Aorta (tissue), 5 donors: ENCODE measurements at regions of chr2 and their contacts with region 1.

Region 1: GRCh38 chr2:218275371-218276072 is 5.2 kb downstream of the PNKD start:
- DNase-seq: no peak
- ATAC-seq: no peak
- H3K4me3 ChIP-seq: no peak overlapping the region
- H3K27ac ChIP-seq: peak overlapping the region in 1 of 2 donors; percentile 13
- H3K4me1 ChIP-seq: no peaks in the 10 kb centered on the region
- H3K27me3 ChIP-seq: no peaks in the 10 kb centered on the region

Region 2: DNA sequence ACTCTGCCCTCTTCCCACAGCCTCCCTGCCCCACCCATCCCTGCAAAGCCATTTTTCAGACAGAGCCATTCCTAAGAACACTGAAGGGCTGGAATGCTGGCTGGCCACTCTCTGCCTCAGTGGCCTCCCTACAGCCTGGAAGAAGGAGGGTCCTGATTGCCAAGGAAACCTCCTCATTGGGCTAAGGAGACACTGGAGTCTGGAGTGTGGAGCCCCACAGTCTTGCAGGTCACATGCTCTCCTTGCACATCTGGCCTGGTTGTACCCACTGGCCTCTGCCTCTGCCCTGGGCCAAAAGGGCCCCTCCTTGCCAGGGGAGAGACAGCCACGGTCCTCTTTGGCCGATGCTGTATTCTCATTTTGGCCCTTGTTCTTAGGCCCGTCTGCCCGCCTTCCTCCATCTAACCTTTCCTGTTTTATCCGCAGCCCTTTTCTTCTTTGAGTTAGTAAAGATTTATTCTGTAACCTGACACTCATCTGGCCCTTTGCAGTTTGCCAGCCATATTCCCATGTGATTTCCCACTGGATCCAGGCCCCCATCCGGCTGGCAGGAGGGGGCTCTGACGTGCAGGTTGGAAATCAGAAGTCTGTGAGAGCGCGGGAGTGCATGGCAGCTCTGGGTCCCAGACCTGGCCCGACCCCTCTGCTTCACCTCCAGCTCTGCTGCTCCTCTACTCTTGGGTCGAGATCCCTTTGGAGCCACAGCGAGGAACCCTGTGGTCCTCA is 70.1 kb after region 1 on chr2:
- intact Hi-C with region 1: loop called in 1 of 2 experiments (anchors 2 kb)
- DNase-seq: no peak
- ATAC-seq: no peak
- H3K4me3 ChIP-seq: no peak overlapping the region
- H3K27ac ChIP-seq: peak overlapping the region in 1 of 2 donors; percentile 59
- H3K4me1 ChIP-seq: peaks cover 2 to 6% of the 10 kb centered on the region in 2 donors
- H3K27me3 ChIP-seq: no peaks in the 10 kb centered on the region

Region 3: GRCh38 chr2:219099329-219099728 is 823.8 kb after region 1 on chr2:
- intact Hi-C with region 1: no loop called
- DNase-seq: no peak
- ATAC-seq: no peak
- H3K4me3 ChIP-seq: no peak overlapping the region
- H3K27ac ChIP-seq: no peak overlapping the region
- H3K4me1 ChIP-seq: no peaks in the 10 kb centered on the region
- H3K27me3 ChIP-seq: no peaks in the 10 kb centered on the region